WTC11 (cell line): ENCODE measurements at regions of chr4 and their contacts with region 1.

Region 1: DNA sequence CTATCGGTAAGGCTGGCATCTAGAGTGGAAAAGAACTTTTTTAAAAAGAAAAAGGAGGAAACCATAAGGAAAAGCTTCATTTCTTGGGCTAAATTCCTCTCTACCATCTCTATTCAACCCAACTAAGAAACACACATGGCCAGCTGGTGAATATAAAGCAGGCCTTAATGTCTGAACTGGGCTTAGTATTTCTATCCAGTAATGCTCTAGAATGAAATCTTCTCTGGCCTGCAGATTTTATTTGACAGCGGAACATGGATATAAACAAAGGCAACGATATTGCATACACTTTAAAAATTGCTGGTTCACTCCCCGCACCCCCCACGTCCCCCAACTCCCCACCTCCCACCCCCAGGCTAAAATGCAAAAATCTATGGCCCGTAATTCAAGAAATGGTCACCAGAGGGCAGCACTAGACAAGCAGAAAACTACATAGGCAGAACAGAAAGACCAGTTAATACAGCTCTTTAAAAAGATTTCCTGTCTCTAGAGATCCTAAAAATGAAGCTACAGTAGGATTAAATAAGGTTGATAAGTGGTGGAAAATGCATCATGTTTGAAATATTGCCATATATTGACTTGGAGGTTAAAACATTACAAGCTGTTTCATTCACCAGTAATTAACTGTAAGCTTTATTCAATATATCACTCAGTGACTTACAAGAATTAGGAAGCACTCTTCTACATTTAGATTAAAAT is 155.2 kb upstream of the GALNT7 start:
- DNase-seq: peak; percentile 66
- ATAC-seq: peak; percentile 23
- H3K4me3 Mint-ChIP-seq: no peak overlapping the region
- H3K27ac Mint-ChIP-seq: no peak overlapping the region
- H3K4me1 Mint-ChIP-seq: peaks cover 39% of the 10 kb centered on the region
- H3K27me3 Mint-ChIP-seq: no peaks in the 10 kb centered on the region
- CTCF ChIP-seq: peak; percentile 77

Region 2: GRCh38 chr4:172992648-172993378 is 20.6 kb before region 1 on chr4:
- CTCF ChIA-PET with region 1: interaction called, 18 read pairs
- POLR2A ChIA-PET with region 1: no interaction called
- DNase-seq: no peak
- ATAC-seq: no peak
- H3K4me3 Mint-ChIP-seq: no peak overlapping the region
- H3K27ac Mint-ChIP-seq: no peak overlapping the region
- H3K4me1 Mint-ChIP-seq: no peaks in the 10 kb centered on the region
- H3K27me3 Mint-ChIP-seq: peaks cover 3% of the 10 kb centered on the region; the same call in 1 of the 2 replicates
- CTCF ChIP-seq: no peak

Region 3: DNA sequence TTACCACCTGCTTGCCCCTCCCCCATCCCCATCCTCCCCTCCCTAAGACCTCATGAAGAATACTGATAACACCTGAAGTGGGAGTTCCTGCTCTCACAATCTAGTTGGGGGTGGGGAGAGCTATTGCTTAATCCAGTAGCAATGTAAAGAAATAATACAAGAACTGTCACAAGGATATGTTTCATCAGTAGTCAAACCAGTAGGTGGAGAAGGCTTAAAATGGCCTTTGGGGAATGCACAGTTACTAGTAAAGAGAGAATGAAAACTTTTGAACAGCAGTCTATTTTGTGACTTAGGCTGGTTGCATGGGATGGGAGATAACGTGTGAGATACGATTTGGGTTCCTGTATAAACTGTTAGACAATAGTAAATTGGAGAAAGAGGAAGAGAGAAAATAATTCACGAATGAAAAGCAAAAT is 161.2 kb after region 1 on chr4:
- CTCF ChIA-PET with region 1: interaction called, 26 read pairs
- POLR2A ChIA-PET with region 1: no interaction called
- DNase-seq: no peak
- ATAC-seq: no peak
- H3K4me3 Mint-ChIP-seq: no peak overlapping the region
- H3K27ac Mint-ChIP-seq: peak overlapping the region; percentile 21; the same call in 1 of the 2 replicates
- H3K4me1 Mint-ChIP-seq: peaks cover 81% of the 10 kb centered on the region
- H3K27me3 Mint-ChIP-seq: no peaks in the 10 kb centered on the region
- CTCF ChIP-seq: no peak

Region 4: DNA sequence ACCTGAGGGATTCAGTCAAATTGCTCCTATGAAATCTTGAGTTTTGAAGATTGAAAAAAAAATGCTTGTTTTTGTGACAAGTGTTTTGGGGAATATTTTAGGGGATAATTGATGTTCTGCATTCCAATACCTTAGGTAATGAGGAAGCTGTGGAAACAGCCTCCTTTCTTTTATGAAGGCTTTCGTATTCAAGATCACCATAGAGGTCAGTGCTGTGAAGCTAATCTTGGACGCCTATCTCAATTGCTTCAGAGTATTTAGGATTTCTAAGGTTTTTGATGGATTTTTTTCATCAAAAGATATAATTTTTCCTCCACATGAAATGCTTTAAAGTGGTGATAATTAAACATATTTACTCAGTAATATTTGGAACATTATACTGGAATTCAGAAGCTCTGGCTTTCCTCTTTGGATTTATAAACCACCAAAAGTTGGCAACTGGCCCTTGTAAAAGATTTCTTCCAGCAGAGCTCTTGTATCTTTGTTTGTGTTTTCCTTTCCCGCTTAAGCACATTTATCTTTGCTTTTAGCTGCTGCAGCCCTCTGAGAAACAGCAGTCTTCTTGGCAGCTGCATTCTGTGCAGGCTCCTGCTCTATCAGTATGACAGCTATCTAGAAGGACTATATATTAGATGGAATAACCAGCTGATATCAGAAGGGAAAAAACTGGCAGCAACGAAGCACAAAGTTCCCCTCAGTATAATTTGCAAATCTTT is 257.1 kb after region 1 on chr4:
- CTCF ChIA-PET with region 1: interaction called, 19 read pairs
- POLR2A ChIA-PET with region 1: no interaction called
- DNase-seq: no peak
- ATAC-seq: 0 out of 2 replicates have a peak, but pooled peaks have one; percentile 24
- H3K4me3 Mint-ChIP-seq: no peak overlapping the region
- H3K27ac Mint-ChIP-seq: no peak overlapping the region
- H3K4me1 Mint-ChIP-seq: peaks cover 33% of the 10 kb centered on the region
- H3K27me3 Mint-ChIP-seq: no peaks in the 10 kb centered on the region
- CTCF ChIP-seq: no peak

Region 5: DNA sequence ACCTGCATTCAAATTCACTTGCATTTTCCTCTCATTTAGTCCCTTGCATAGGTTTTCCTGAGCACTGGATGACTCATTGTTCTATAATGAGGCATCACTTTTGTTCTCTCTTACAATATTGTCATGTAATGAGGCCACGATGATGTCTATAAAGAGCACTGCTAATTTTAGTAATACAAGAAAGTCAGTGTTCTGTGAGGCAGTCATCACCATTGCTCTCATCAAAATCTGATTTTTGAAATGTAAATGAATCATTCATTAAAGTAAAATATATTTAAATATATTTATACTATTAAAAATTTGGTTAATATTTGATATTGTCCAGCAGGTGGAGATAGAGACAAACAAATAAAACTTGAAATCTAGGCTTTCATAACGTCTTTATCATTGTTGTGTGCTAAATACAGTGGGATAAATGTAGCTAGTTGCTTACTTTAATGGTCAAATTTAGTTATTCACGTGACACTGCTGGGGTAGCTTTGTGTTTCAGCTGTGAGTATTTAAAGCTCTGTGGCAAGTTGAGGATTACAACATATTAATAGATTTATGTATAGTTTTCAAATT is 305.3 kb after region 1 on chr4:
- CTCF ChIA-PET with region 1: interaction called, 37 read pairs
- POLR2A ChIA-PET with region 1: no interaction called
- DNase-seq: no peak
- ATAC-seq: no peak
- H3K4me3 Mint-ChIP-seq: no peak overlapping the region
- H3K27ac Mint-ChIP-seq: no peak overlapping the region
- H3K4me1 Mint-ChIP-seq: peaks cover 17% of the 10 kb centered on the region
- H3K27me3 Mint-ChIP-seq: no peaks in the 10 kb centered on the region
- CTCF ChIP-seq: no peak

Region 6: GRCh38 chr4:173420324-173420752 is 407.0 kb after region 1 on chr4:
- CTCF ChIA-PET with region 1: interaction called, 30 read pairs
- POLR2A ChIA-PET with region 1: no interaction called
- DNase-seq: no peak
- ATAC-seq: 0 out of 2 replicates have a peak, but pooled peaks have one; percentile 36
- H3K4me3 Mint-ChIP-seq: no peak overlapping the region
- H3K27ac Mint-ChIP-seq: no peak overlapping the region
- H3K4me1 Mint-ChIP-seq: no peaks in the 10 kb centered on the region
- H3K27me3 Mint-ChIP-seq: no peaks in the 10 kb centered on the region
- CTCF ChIP-seq: no peak